H1 (cell line): ENCODE measurements at regions of chr4 and their contacts with region 1.

Region 1: DNA sequence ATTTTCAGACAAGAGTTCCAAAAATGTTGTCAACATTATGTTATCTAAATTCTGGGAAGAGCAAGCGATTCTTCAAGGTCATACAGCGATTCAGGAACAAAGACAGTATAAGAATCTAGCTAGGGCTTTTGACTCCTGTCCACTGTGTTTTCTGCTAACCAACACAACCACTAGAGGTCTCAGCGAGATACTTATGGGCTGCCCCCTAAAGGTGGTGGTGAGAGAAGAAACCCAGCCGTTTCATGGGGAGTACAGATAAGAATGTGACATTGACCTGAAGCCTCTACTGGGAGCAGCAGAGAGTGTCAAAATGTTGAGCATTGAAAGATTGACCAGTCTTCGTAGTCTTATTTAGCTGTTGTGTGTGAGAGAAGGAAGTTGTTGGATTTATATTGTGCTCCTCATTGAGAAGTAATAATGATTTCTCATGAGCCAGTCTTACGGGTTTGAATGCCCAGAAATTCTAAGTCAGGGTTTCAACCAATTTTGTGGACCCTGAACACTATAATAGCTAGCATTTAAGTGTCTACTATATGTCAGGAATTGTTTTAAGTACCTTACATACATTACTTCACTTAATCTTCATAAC is 168.3 kb downstream of the SPRY1 start:
- DNase-seq: peak; percentile 41 to 52
- H3K4me3 ChIP-seq: no peak overlapping the region
- H3K27ac ChIP-seq: no peak overlapping the region
- H3K4me1 ChIP-seq: no peaks in the 10 kb centered on the region
- H3K27me3 ChIP-seq: no peaks in the 10 kb centered on the region
- CTCF ChIP-seq: peak; percentile 51 to 100 (median 97)
- EP300 ChIP-seq: no peak
- POLR2A ChIP-seq: no peak
- RAD21 ChIP-seq: peak; percentile 80 to 88

Region 2: GRCh38 chr4:123350191-123350544 is 214.7 kb before region 1 on chr4:
- CTCF ChIA-PET with region 1: interaction called, 15 read pairs
- POLR2A ChIA-PET with region 1: no interaction called
- DNase-seq: peak in 1 of 2 experiments; percentile 41
- H3K4me3 ChIP-seq: no peak overlapping the region
- H3K27ac ChIP-seq: no peak overlapping the region
- H3K4me1 ChIP-seq: peaks cover 0 to 2% (median 0%) of the 10 kb centered on the region in 4 experiments; a peak in 2 of 7 replicates
- H3K27me3 ChIP-seq: no peaks in the 10 kb centered on the region
- CTCF ChIP-seq: peak in 2 of 3 experiments; percentile 70 to 72; a peak in 3 of 4 replicates
- EP300 ChIP-seq: no peak
- POLR2A ChIP-seq: no peak
- RAD21 ChIP-seq: peak; percentile 95 to 96

Region 3: GRCh38 chr4:123408471-123409084 is 156.3 kb before region 1 on chr4:
- CTCF ChIA-PET with region 1: interaction called, 14 read pairs
- POLR2A ChIA-PET with region 1: no interaction called
- DNase-seq: no peak
- H3K4me3 ChIP-seq: no peak overlapping the region
- H3K27ac ChIP-seq: no peak overlapping the region
- H3K4me1 ChIP-seq: peaks cover 0 to 8% (median 0%) of the 10 kb centered on the region in 4 experiments; a peak in 2 of 7 replicates
- H3K27me3 ChIP-seq: no peaks in the 10 kb centered on the region
- CTCF ChIP-seq: no peak
- EP300 ChIP-seq: no peak
- POLR2A ChIP-seq: no peak
- RAD21 ChIP-seq: no peak

Region 4: DNA sequence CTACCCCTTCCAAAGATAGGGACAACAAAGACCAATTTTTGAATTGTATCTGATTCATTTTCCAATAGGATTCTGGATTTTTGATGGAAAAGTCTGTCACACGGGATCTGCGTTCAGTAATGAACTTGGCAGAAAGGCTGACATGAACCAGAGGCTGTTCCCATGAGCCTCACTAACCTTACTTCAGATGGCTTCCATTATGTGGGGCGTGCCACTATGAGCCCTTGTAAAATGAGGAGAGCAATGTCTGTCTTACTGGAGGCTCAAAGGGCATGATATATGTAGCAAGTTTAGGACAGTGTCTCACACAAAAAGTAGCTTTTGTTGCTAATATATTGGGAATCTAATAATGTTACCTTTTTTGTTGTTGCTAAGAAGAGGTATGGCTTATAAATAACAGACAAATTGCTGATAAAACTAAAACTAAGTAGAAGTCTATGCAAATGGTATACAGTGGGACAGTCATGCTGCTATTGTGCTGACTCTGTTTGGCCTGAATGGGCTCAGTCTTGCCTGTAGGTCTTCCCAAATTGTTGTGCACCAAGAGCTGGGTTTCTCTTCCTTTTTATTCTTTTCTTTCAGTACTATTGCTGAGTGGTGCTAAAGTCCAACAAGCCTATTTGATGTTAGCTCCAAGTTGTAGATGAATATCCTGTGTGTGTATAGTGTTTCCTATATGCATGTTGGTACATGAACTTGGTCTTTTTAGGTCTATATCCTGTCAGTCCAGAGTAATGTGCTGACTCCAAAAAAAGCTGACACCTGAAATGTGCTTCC is 36.2 kb before region 1 on chr4:
- CTCF ChIA-PET with region 1: interaction called, 10 read pairs
- POLR2A ChIA-PET with region 1: no interaction called
- DNase-seq: no peak
- H3K4me3 ChIP-seq: no peak overlapping the region
- H3K27ac ChIP-seq: no peak overlapping the region
- H3K4me1 ChIP-seq: no peaks in the 10 kb centered on the region
- H3K27me3 ChIP-seq: no peaks in the 10 kb centered on the region
- CTCF ChIP-seq: no peak
- EP300 ChIP-seq: no peak
- POLR2A ChIP-seq: no peak
- RAD21 ChIP-seq: no peak

Region 5: GRCh38 chr4:123580981-123581664 is 16.3 kb after region 1 on chr4:
- CTCF ChIA-PET with region 1: interaction called, 29 read pairs
- POLR2A ChIA-PET with region 1: no interaction called
- DNase-seq: no peak
- H3K4me3 ChIP-seq: no peak overlapping the region
- H3K27ac ChIP-seq: no peak overlapping the region
- H3K4me1 ChIP-seq: peaks cover 0 to 3% (median 0%) of the 10 kb centered on the region in 4 experiments; a peak in 1 of 7 replicates
- H3K27me3 ChIP-seq: no peaks in the 10 kb centered on the region
- CTCF ChIP-seq: peak; percentile 24 to 46 (median 26)
- EP300 ChIP-seq: no peak
- POLR2A ChIP-seq: no peak
- RAD21 ChIP-seq: peak; percentile 9 to 34; a peak in 2 of 4 replicates

Region 6: DNA sequence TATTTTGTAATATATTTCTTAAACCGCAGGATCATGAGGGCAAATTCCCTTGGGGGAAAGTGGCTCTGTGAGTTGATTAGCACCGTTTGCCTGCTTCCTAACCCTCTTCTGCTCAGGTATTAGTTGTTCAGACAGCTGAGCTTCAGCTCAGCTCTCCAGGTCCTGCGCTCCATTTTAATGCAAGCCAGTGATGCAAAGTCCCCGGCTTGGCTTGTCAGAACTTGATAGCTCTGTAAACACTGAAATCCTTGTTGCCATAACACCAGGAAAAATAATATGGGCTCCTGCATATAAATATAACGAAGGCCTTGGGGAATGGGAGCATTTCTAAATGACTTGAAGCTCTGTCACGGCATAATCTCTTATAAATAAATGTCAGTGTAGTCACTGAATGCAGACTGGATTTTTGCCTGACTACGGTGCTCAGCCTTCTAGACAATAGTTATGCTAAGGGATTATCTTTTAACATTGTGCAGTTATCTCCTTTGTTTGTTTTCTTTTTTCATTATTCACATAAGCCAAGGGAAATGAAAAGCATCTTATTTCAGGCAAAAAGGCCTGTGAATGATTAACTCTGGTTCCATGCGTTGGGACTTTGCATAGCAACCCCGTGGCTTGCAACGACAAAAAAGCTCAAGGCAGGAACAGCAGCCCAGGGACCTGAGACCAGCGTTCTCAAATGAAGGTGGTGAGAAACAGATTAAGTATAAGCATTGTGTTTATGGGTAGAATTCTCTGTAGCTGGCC is 85.0 kb after region 1 on chr4:
- CTCF ChIA-PET with region 1: interaction called, 12 read pairs
- POLR2A ChIA-PET with region 1: no interaction called
- DNase-seq: peak in 1 of 2 experiments; percentile 5
- H3K4me3 ChIP-seq: no peak overlapping the region
- H3K27ac ChIP-seq: no peak overlapping the region
- H3K4me1 ChIP-seq: peaks cover 1 to 3% (median 2%) of the 10 kb centered on the region in 4 experiments; a peak in 3 of 7 replicates
- H3K27me3 ChIP-seq: no peaks in the 10 kb centered on the region
- CTCF ChIP-seq: no peak
- EP300 ChIP-seq: no peak
- POLR2A ChIP-seq: no peak
- RAD21 ChIP-seq: no peak